ENCODE measurements at regions of chr10 and their contacts with region 1.

Region 1: GRCh38 chr10:99711129-99711719 is 20.7 kb downstream of the COX15 start:
- DNase-seq: peak; percentile 17
- ATAC-seq: peak; percentile 88
- H3K4me3 ChIP-seq: no peak overlapping the region
- H3K27ac ChIP-seq: no peak overlapping the region
- H3K4me1 ChIP-seq: no peaks in the 10 kb centered on the region; the same call in 1 of the 2 replicates
- H3K27me3 ChIP-seq: no peaks in the 10 kb centered on the region
- CTCF ChIP-seq: peak; percentile 75

Region 2: GRCh38 chr10:99430451-99431189 is 280.6 kb before region 1 on chr10 and contains the start of gene GOT1:
- CTCF ChIA-PET with region 1: no interaction called
- POLR2A ChIA-PET with region 1: no interaction called
- in situ Hi-C with region 1: no loop called
- intact Hi-C with region 1: loop called (anchors 10 kb)
- DNase-seq: peak; percentile 99
- ATAC-seq: peak; percentile 98
- H3K4me3 ChIP-seq: peak within 1 kb of the TSS; percentile 90 to 98
- H3K27ac ChIP-seq: peak within 1 kb of the TSS; percentile 94
- H3K4me1 ChIP-seq: peaks cover 17% of the 10 kb centered on the region
- H3K27me3 ChIP-seq: no peaks in the 10 kb centered on the region
- CTCF ChIP-seq: no peak
- total RNA-seq, gene GOT1: 51.6 TPM

Region 3: DNA sequence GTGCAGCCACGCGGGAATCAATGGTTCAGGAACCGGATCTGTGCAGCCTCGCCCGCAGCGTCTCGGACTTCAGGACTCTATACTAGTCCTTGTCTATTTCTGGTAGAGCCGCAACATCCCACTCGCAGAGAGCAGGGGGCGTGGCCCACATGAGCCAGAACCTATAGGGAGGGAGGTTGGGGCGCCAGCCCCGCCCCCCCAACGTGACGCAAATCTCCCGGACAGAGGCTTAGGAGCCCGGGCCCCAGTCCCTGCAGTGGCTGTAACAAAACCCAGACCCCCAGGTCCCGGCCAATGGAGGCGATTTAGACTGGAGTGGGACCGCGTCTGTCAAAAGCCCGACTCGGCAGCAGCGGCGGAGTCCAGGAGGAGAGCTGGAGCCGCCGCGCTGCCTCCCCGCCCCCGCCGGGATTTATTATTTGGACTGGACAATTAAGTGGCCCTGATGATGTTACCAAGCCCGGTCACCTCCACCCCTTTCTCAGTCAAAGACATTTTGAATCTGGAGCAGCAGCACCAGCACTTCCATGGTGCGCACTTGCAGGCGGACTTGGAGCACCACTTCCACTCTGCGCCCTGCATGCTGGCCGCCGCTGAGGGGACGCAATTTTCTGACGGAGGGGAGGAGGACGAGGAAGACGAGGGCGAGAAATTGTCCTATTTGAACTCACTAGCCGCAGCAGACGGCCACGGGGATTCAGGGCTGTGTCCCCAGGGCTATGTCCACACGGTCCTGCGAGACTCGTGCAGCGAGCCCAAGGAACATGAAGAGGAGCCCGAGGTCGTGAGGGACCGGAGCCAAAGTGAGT is 178.3 kb before region 1 on chr10 and contains the start of gene NKX2-3:
- CTCF ChIA-PET with region 1: no interaction called
- POLR2A ChIA-PET with region 1: no interaction called
- in situ Hi-C with region 1: no loop called
- intact Hi-C with region 1: no loop called
- DNase-seq: no peak
- ATAC-seq: peak; percentile 86
- H3K4me3 ChIP-seq: peak within 1 kb of the TSS; percentile 49 to 54
- H3K27ac ChIP-seq: no peak within 1 kb of the TSS
- H3K4me1 ChIP-seq: no peaks in the 10 kb centered on the region; the same call in 1 of the 2 replicates
- H3K27me3 ChIP-seq: peaks cover 18% of the 10 kb centered on the region
- CTCF ChIP-seq: no peak
- total RNA-seq, gene NKX2-3: 0.15 TPM

Region 4: GRCh38 chr10:99560277-99561126 is 150.7 kb before region 1 on chr10:
- CTCF ChIA-PET with region 1: no interaction called
- POLR2A ChIA-PET with region 1: no interaction called
- in situ Hi-C with region 1: no loop called
- intact Hi-C with region 1: loop called (anchors 10 kb)
- DNase-seq: peak; percentile 28
- ATAC-seq: peak; percentile 89
- H3K4me3 ChIP-seq: no peak overlapping the region
- H3K27ac ChIP-seq: no peak overlapping the region
- H3K4me1 ChIP-seq: no peaks in the 10 kb centered on the region
- H3K27me3 ChIP-seq: peaks cover 7% of the 10 kb centered on the region; the same call in 1 of the 2 replicates
- CTCF ChIP-seq: peak; percentile 93

Region 5: GRCh38 chr10:99630439-99630838 is 80.8 kb before region 1 on chr10:
- CTCF ChIA-PET with region 1: no interaction called
- POLR2A ChIA-PET with region 1: interaction called, 4 read pairs
- in situ Hi-C with region 1: no loop called
- intact Hi-C with region 1: loop called (anchors 5 kb)
- DNase-seq: no peak
- ATAC-seq: peak; percentile 83
- H3K4me3 ChIP-seq: no peak overlapping the region
- H3K27ac ChIP-seq: no peak overlapping the region
- H3K4me1 ChIP-seq: no peaks in the 10 kb centered on the region
- H3K27me3 ChIP-seq: no peaks in the 10 kb centered on the region; the same call in 1 of the 2 replicates
- CTCF ChIP-seq: peak; percentile 55

Region 6: DNA sequence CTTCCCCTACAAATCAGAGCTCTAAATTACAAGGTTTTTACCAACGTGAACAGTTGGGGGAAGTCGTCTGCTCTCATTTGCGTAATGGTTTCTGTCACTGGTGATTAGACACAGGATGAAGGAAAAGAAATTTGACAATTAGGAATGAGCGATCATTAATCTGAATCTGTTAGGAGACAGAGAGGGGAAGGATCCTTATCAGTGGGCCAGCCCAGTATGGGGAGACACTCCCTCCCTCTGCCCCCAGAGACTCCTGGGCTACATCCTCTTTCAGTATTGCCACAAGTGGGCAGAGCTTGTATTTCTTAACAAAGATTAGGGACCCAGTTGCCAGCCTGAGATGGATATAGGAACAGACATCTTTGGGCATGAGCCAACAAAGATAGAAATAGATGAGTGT is 840.0 kb after region 1 on chr10:
- CTCF ChIA-PET with region 1: no interaction called
- POLR2A ChIA-PET with region 1: no interaction called
- in situ Hi-C with region 1: no loop called
- intact Hi-C with region 1: no loop called
- DNase-seq: no peak
- ATAC-seq: no peak
- H3K4me3 ChIP-seq: no peak overlapping the region
- H3K27ac ChIP-seq: no peak overlapping the region
- H3K4me1 ChIP-seq: no peaks in the 10 kb centered on the region
- H3K27me3 ChIP-seq: no peaks in the 10 kb centered on the region
- CTCF ChIP-seq: no peak